CD4-positive, alpha-beta T cell (primary cell): ENCODE measurements at regions of chr9 and their contacts with region 1.

Region 1: GRCh38 chr9:2424619-2425033 is 197.0 kb upstream of the VLDLR start:
- DNase-seq: no peak
- ATAC-seq: no peak
- H3K4me3 ChIP-seq: no peak overlapping the region
- H3K4me3 Mint-ChIP-seq: no peak overlapping the region
- H3K27ac ChIP-seq: no peak overlapping the region
- H3K27ac Mint-ChIP-seq: no peak overlapping the region
- H3K4me1 ChIP-seq: no peaks in the 10 kb centered on the region
- H3K4me1 Mint-ChIP-seq: no peaks in the 10 kb centered on the region
- H3K27me3 ChIP-seq: no peaks in the 10 kb centered on the region
- H3K27me3 Mint-ChIP-seq: peaks cover 9% of the 10 kb centered on the region
- CTCF ChIP-seq: no peak

Region 2: DNA sequence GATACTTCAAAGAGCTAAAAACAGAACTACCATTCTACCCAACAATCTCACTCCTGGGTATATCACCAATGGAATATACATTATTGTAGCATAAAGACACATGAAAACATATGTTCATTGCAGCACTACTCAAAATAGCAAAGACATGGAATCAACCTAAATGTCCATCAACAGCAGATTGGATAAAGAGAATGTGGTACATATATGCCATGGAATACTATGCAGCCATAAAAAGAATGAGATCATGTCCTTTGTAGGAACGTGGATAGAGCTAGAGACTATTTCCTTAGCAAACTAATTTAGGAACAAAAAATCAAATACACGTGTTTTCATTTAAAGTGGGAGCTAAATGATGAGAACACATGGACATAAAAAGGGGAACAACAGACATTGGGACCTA is 51.0 kb before region 1 on chr9:
- CTCF ChIA-PET with region 1: no interaction called
- POLR2A ChIA-PET with region 1: no interaction called
- intact Hi-C with region 1: loop called in 1 of 2 experiments (anchors 5 kb)
- DNase-seq: no peak
- ATAC-seq: no peak
- H3K4me3 ChIP-seq: no peak overlapping the region
- H3K4me3 Mint-ChIP-seq: no peak overlapping the region
- H3K27ac ChIP-seq: no peak overlapping the region
- H3K27ac Mint-ChIP-seq: no peak overlapping the region
- H3K4me1 ChIP-seq: no peaks in the 10 kb centered on the region
- H3K4me1 Mint-ChIP-seq: no peaks in the 10 kb centered on the region
- H3K27me3 ChIP-seq: no peaks in the 10 kb centered on the region
- H3K27me3 Mint-ChIP-seq: peaks cover 3% of the 10 kb centered on the region
- CTCF ChIP-seq: no peak